Prostate gland (tissue), 2 donors: ENCODE measurements at regions of chr2 and their contacts with region 1.

Region 1: GRCh38 chr2:68121873-68122679 is 35.6 kb upstream of the PNO1 start:
- DNase-seq: peak; percentile 83
- H3K4me3 ChIP-seq: no peak overlapping the region
- H3K27ac ChIP-seq: no peak overlapping the region
- H3K4me1 ChIP-seq: no peaks in the 10 kb centered on the region
- H3K27me3 ChIP-seq: no peaks in the 10 kb centered on the region
- CTCF ChIP-seq: peak; percentile 92 to 93 (median 93)
- POLR2A ChIP-seq: no peak

Region 2: DNA sequence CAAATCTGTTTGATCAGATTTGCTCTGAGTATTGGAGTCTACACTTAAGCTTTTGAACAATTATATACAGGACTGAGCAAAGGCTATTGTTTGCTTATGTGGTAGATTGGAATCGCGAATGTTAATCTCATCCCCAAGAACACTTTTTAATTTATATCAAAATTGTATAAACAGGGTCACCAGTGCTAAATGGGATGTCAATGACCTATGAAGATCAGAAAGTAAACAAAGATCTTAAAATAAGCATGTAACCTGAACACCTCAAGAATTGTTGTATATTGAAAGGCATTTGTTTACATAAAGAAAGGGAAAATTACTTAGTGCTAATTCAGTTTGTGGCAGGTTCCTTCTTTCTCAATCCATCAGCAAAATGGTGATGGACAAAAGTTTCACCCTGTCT is 1481.6 kb before region 1 on chr2:
- intact Hi-C with region 1: no loop called
- DNase-seq: no peak
- H3K4me3 ChIP-seq: no peak overlapping the region
- H3K27ac ChIP-seq: no peak overlapping the region
- H3K4me1 ChIP-seq: no peaks in the 10 kb centered on the region
- H3K27me3 ChIP-seq: no peaks in the 10 kb centered on the region
- CTCF ChIP-seq: no peak
- POLR2A ChIP-seq: no peak

Region 3: GRCh38 chr2:68244456-68244855 is 122.4 kb after region 1 on chr2:
- intact Hi-C with region 1: loop called (anchors 2 kb)
- DNase-seq: no peak
- H3K4me3 ChIP-seq: no peak overlapping the region
- H3K27ac ChIP-seq: no peak overlapping the region
- H3K4me1 ChIP-seq: peaks cover 6% of the 10 kb centered on the region
- H3K27me3 ChIP-seq: no peaks in the 10 kb centered on the region
- CTCF ChIP-seq: peak in 2 of 4 experiments; percentile 16 to 24
- POLR2A ChIP-seq: no peak

Region 4: GRCh38 chr2:68282811-68283418 is 160.8 kb after region 1 on chr2:
- intact Hi-C with region 1: loop called (anchors 5 kb)
- DNase-seq: peak; percentile 21
- H3K4me3 ChIP-seq: no peak overlapping the region
- H3K27ac ChIP-seq: no peak overlapping the region
- H3K4me1 ChIP-seq: peaks cover 8% of the 10 kb centered on the region
- H3K27me3 ChIP-seq: no peaks in the 10 kb centered on the region
- CTCF ChIP-seq: peak; percentile 39 to 76 (median 70)
- POLR2A ChIP-seq: no peak